ENCODE measurements at regions of chr1 and their contacts with region 1.

Region 1: DNA sequence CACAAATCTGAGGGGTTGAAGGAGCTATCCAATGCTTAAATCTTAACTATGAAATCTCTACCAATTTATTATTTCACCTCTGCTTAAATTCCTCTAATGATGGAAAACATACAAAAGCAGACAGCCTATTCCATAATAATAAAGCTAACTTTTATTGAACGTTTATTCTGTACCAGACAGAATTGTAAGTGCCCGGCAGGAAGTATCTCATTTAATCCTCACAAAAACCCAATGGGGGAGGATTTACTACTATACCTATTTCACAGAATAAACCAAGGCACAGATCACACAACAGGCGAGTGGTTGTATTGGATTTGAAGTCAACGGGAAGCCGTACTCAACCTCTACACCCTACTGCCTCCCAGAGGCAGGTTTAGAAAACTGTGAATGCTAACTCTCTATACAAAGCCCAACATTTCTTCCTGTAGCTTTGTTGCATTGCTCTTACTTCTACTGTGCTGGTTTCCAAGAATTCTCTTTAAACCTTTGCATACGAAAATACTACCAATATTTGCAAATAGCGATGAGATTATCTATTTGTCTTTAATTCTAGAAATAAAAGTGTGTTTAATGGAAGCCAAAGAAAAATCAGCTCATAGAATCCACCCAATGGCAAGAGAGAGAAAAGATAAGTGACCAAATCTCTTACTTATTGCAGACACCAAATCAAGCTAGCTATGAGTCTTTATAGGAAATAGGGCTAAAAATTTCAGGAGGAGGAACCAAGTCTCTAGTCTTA is 33.5 kb upstream of the C1orf53 start:
- DNase-seq: no peak
- ATAC-seq: peak; percentile 92
- H3K4me3 ChIP-seq: no peak overlapping the region
- H3K27ac ChIP-seq: no peak overlapping the region
- H3K4me1 ChIP-seq: no peaks in the 10 kb centered on the region
- H3K27me3 ChIP-seq: no peaks in the 10 kb centered on the region
- CTCF ChIP-seq: peak; percentile 59 to 71 (median 61); a peak in 5 of 6 replicates
- EP300 ChIP-seq: no peak
- POLR2A ChIP-seq: no peak
- RAD21 ChIP-seq: peak; percentile 94

Region 2: GRCh38 chr1:197515421-197515820 is 353.5 kb before region 1 on chr1:
- CTCF ChIA-PET with region 1: interaction called, 39 read pairs
- POLR2A ChIA-PET with region 1: no interaction called
- RAD21 ChIA-PET with region 1: interaction called, 4 read pairs
- SMC1A ChIA-PET with region 1: interaction called, 8 read pairs
- in situ Hi-C with region 1: no loop called
- intact Hi-C with region 1: loop called (anchors 2 kb)
- DNase-seq: no peak
- ATAC-seq: no peak
- H3K4me3 ChIP-seq: no peak overlapping the region
- H3K27ac ChIP-seq: no peak overlapping the region
- H3K4me1 ChIP-seq: no peaks in the 10 kb centered on the region
- H3K27me3 ChIP-seq: no peaks in the 10 kb centered on the region
- CTCF ChIP-seq: no peak
- EP300 ChIP-seq: no peak
- POLR2A ChIP-seq: no peak
- RAD21 ChIP-seq: no peak

Region 3: DNA sequence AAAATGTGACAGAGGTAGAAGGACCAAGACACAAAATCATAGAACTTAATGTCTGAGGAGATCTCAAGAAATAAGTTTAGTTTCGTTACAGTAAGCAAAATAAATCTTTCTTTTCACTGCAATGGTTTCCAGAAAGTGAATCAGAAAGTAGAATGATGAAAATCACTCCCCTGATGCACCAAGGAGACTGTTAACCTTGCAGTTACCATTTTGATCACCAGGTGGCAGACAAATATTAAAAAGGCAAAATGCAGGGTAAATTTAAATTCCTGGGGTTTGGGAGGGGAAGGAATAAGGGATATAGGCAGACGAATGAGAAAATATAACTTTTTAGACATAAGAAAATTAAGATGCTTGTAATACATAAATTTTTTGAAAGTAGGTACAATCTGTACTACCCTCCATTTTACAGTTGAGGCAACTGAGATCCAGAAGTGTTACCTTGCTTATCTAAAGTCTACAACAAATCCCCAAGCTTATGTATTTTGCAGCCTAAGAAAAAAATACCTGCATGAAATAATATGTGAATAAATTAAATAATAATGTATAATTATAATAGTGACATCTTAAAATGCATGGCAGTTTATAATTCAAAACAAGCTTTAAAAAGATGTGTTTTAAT is 347.7 kb before region 1 on chr1:
- CTCF ChIA-PET with region 1: interaction called, 39 read pairs
- POLR2A ChIA-PET with region 1: no interaction called
- RAD21 ChIA-PET with region 1: interaction called, 14 read pairs
- SMC1A ChIA-PET with region 1: interaction called, 11 read pairs
- in situ Hi-C with region 1: no loop called
- intact Hi-C with region 1: loop called (anchors 2 kb)
- DNase-seq: no peak
- ATAC-seq: peak; percentile 75
- H3K4me3 ChIP-seq: no peak overlapping the region
- H3K27ac ChIP-seq: no peak overlapping the region
- H3K4me1 ChIP-seq: no peaks in the 10 kb centered on the region
- H3K27me3 ChIP-seq: no peaks in the 10 kb centered on the region
- CTCF ChIP-seq: peak; percentile 51 to 64 (median 62)
- EP300 ChIP-seq: no peak
- POLR2A ChIP-seq: no peak
- RAD21 ChIP-seq: peak; percentile 63

Region 4: DNA sequence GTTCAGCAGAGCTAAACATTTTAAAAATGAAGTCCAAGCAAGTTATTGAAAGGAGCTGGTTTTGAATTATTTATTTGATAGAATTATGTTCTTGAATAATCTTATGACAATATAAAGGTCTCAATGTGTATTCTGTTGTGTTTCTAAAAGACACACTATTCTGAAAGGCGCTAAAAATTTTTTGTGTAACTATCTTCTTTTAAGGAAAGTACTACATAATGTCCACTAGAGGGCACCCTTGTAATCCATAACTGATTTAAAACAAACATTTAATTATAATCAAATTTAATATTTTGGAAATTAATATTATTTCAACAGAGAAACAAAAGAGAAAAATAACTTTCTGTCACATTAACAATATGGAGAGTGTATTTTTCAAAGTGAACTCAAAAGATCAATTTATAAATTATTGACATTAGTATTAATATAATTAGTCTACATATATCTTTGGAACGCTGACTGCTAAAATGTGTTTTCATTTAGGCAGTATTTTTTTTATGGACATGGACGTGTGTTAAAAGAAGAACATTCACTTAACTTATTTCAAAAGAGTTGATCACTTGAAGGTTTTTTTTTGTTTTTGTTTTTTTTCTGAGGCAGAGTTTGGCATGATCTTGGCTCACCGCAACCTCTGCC is 342.1 kb before region 1 on chr1:
- CTCF ChIA-PET with region 1: interaction called, 39 read pairs
- POLR2A ChIA-PET with region 1: no interaction called
- RAD21 ChIA-PET with region 1: interaction called, 14 read pairs
- SMC1A ChIA-PET with region 1: interaction called, 11 read pairs
- in situ Hi-C with region 1: no loop called
- intact Hi-C with region 1: no loop called
- DNase-seq: no peak
- ATAC-seq: no peak
- H3K4me3 ChIP-seq: no peak overlapping the region
- H3K27ac ChIP-seq: no peak overlapping the region
- H3K4me1 ChIP-seq: no peaks in the 10 kb centered on the region
- H3K27me3 ChIP-seq: no peaks in the 10 kb centered on the region
- CTCF ChIP-seq: peak in 2 of 3 experiments; percentile 29 to 39; a peak in 3 of 6 replicates
- EP300 ChIP-seq: no peak
- POLR2A ChIP-seq: no peak
- RAD21 ChIP-seq: peak; percentile 35; the same call in 1 of the 2 replicates

Region 5: GRCh38 chr1:197614916-197615692 is 253.8 kb before region 1 on chr1:
- CTCF ChIA-PET with region 1: interaction called, 43 read pairs
- POLR2A ChIA-PET with region 1: no interaction called
- RAD21 ChIA-PET with region 1: interaction called, 26 read pairs
- SMC1A ChIA-PET with region 1: interaction called, 30 read pairs
- in situ Hi-C with region 1: loop called (anchors 10 kb)
- intact Hi-C with region 1: loop called (anchors 1 kb)
- DNase-seq: peak; percentile 5
- ATAC-seq: peak; percentile 87
- H3K4me3 ChIP-seq: no peak overlapping the region
- H3K27ac ChIP-seq: no peak overlapping the region
- H3K4me1 ChIP-seq: no peaks in the 10 kb centered on the region
- H3K27me3 ChIP-seq: no peaks in the 10 kb centered on the region
- CTCF ChIP-seq: peak; percentile 52 to 61 (median 56); a peak in 5 of 6 replicates
- EP300 ChIP-seq: no peak
- POLR2A ChIP-seq: no peak
- RAD21 ChIP-seq: peak; percentile 70

Region 6: GRCh38 chr1:197692965-197693364 is 176.0 kb before region 1 on chr1:
- CTCF ChIA-PET with region 1: interaction called, 37 read pairs
- POLR2A ChIA-PET with region 1: no interaction called
- RAD21 ChIA-PET with region 1: interaction called, 41 read pairs
- SMC1A ChIA-PET with region 1: interaction called, 16 read pairs
- in situ Hi-C with region 1: loop called (anchors 10 kb)
- intact Hi-C with region 1: loop called (anchors 2 kb)
- DNase-seq: no peak
- ATAC-seq: peak; percentile 60; the same call in 2 of the 3 replicates
- H3K4me3 ChIP-seq: no peak overlapping the region
- H3K27ac ChIP-seq: no peak overlapping the region
- H3K4me1 ChIP-seq: no peaks in the 10 kb centered on the region
- H3K27me3 ChIP-seq: no peaks in the 10 kb centered on the region
- CTCF ChIP-seq: peak in 2 of 3 experiments; percentile 36 to 42; a peak in 2 of 6 replicates
- EP300 ChIP-seq: no peak
- POLR2A ChIP-seq: no peak
- RAD21 ChIP-seq: peak; percentile 68

Region 7: GRCh38 chr1:197705941-197706340 is 163.0 kb before region 1 on chr1:
- CTCF ChIA-PET with region 1: interaction called, 10 read pairs
- POLR2A ChIA-PET with region 1: no interaction called
- RAD21 ChIA-PET with region 1: no interaction called
- SMC1A ChIA-PET with region 1: no interaction called
- in situ Hi-C with region 1: no loop called
- intact Hi-C with region 1: no loop called
- DNase-seq: no peak
- ATAC-seq: no peak
- H3K4me3 ChIP-seq: no peak overlapping the region
- H3K27ac ChIP-seq: no peak overlapping the region
- H3K4me1 ChIP-seq: no peaks in the 10 kb centered on the region
- H3K27me3 ChIP-seq: no peaks in the 10 kb centered on the region
- CTCF ChIP-seq: no peak
- EP300 ChIP-seq: no peak
- POLR2A ChIP-seq: no peak
- RAD21 ChIP-seq: no peak

Region 8: GRCh38 chr1:198517623-198518199 is 648.8 kb after region 1 on chr1:
- CTCF ChIA-PET with region 1: no interaction called
- POLR2A ChIA-PET with region 1: no interaction called
- RAD21 ChIA-PET with region 1: no interaction called
- SMC1A ChIA-PET with region 1: no interaction called
- in situ Hi-C with region 1: no loop called
- intact Hi-C with region 1: no loop called
- DNase-seq: no peak
- ATAC-seq: no peak
- H3K4me3 ChIP-seq: no peak overlapping the region
- H3K27ac ChIP-seq: no peak overlapping the region
- H3K4me1 ChIP-seq: peaks cover 18% of the 10 kb centered on the region
- H3K27me3 ChIP-seq: no peaks in the 10 kb centered on the region; a peak in 1 of 4 replicates
- CTCF ChIP-seq: no peak
- EP300 ChIP-seq: no peak
- POLR2A ChIP-seq: no peak
- RAD21 ChIP-seq: no peak